Activated CD4-positive, alpha-beta memory T cell treated with anti-CD3 and anti-CD28 coated beads for 36 hours (primary cell): ENCODE measurements at regions of chr2 and their contacts with region 1.

Region 1: GRCh38 chr2:223760838-223761502 is 76.4 kb downstream of the AP1S3 start:
- DNase-seq: peak; percentile 78
- H3K4me3 Mint-ChIP-seq: no peak overlapping the region
- H3K27ac Mint-ChIP-seq: peak overlapping the region; percentile 65
- H3K4me1 Mint-ChIP-seq: peaks cover 24% of the 10 kb centered on the region
- H3K27me3 Mint-ChIP-seq: no peaks in the 10 kb centered on the region

Region 2: GRCh38 chr2:223696719-223697118 is 64.3 kb before region 1 on chr2:
- CTCF ChIA-PET with region 1: no interaction called
- POLR2A ChIA-PET with region 1: no interaction called
- intact Hi-C with region 1: loop called (anchors 1 kb)
- DNase-seq: no peak
- H3K4me3 Mint-ChIP-seq: no peak overlapping the region
- H3K27ac Mint-ChIP-seq: no peak overlapping the region
- H3K4me1 Mint-ChIP-seq: peaks cover 10% of the 10 kb centered on the region
- H3K27me3 Mint-ChIP-seq: peaks cover 2% of the 10 kb centered on the region

Region 3: GRCh38 chr2:223727562-223727961 is 33.4 kb before region 1 on chr2:
- CTCF ChIA-PET with region 1: no interaction called
- POLR2A ChIA-PET with region 1: no interaction called
- intact Hi-C with region 1: loop called (anchors 5 kb)
- DNase-seq: peak; percentile 25
- H3K4me3 Mint-ChIP-seq: no peak overlapping the region
- H3K27ac Mint-ChIP-seq: no peak overlapping the region
- H3K4me1 Mint-ChIP-seq: no peaks in the 10 kb centered on the region
- H3K27me3 Mint-ChIP-seq: peaks cover 2% of the 10 kb centered on the region

Region 4: DNA sequence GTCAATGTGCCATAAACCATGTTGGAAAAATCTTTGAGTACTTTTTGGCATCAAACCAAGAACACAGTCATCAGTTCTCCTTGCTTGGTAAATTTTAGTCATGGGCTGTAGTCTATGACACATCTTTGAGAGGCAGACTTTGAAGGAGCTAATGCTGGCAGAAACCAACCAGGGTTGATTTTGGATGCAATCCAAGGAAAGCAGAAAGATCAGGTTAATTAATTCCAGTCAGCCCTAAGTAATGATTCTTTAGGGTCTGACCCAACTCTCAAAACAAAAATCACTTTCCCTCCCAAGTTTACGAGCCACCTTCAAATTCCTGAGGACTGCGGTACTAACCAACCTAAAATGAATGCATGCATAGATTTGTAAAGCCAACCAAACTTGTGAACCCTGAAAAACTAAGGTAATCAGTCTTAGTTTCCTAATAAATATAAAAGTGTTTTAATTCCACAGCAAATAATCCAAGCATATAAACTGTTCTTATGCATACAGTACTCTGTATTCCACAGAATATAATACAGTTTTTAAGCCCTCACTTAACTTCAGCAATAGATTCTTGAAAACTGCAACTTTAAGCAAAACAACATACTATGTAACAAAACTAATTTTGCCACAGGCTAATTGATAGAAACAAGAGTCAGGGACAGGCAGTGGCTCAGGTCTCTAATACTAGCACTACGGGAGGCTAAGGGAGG is 54.4 kb after region 1 on chr2:
- CTCF ChIA-PET with region 1: no interaction called
- POLR2A ChIA-PET with region 1: no interaction called
- intact Hi-C with region 1: loop called (anchors 2 kb)
- DNase-seq: no peak
- H3K4me3 Mint-ChIP-seq: no peak overlapping the region
- H3K27ac Mint-ChIP-seq: no peak overlapping the region
- H3K4me1 Mint-ChIP-seq: peaks cover 9% of the 10 kb centered on the region
- H3K27me3 Mint-ChIP-seq: no peaks in the 10 kb centered on the region

Region 5: GRCh38 chr2:223837287-223838061 is 76.5 kb after region 1 on chr2 and contains the start of gene AP1S3:
- CTCF ChIA-PET with region 1: interaction called, 4 read pairs
- POLR2A ChIA-PET with region 1: no interaction called
- intact Hi-C with region 1: loop called (anchors 1 kb)
- DNase-seq: peak; percentile 83
- H3K4me3 Mint-ChIP-seq: peak within 1 kb of the TSS; percentile 94
- H3K27ac Mint-ChIP-seq: no peak within 1 kb of the TSS
- H3K4me1 Mint-ChIP-seq: peaks cover 11% of the 10 kb centered on the region
- H3K27me3 Mint-ChIP-seq: no peaks in the 10 kb centered on the region
- total RNA-seq, gene AP1S3: 10.1 to 12.1 TPM

Region 6: DNA sequence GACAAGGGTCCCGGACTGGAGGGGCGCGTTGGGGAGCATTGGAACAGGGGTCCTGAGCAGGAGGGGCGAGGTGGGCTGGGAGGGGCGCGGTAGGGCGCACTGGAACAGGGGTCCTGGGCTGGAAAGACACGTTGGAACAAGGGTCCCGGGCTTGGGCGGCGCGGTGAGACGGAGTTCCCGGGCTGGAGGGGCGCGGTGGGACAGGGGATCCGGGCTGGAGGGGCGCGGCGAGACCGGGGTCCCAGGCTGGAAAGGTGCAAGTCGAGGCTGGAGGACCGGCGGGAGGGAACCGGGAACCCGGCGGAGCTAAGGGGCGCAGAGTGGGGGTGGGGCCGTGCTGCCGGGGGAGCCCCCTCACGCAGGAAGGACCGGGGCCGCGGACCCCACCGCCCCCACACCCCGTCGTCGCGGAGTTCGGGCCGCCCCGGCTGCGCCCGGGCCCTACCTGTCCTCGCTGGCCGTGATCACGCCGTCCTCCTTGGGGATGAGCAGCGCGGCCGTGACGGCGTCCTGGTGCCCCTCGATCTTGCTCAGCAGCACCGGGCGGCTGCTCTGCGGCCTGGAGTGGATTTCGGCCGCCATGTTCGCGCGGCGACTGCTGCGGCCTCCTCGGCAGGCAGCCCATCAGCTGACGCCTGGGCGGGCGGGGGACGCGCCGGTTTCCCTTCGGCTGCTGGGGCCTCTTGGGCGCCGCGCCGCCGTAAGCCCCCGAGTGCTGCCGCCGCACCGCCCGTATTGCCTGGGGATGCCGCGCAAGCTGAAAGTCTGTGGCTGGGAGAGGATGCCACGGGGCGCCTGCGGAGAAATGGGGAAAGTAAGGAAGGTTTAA is 183.9 kb after region 1 on chr2 and contains the start of gene WDFY1:
- CTCF ChIA-PET with region 1: no interaction called
- POLR2A ChIA-PET with region 1: interaction called, 5 read pairs
- intact Hi-C with region 1: loop called (anchors 1 kb)
- DNase-seq: peak; percentile 88
- H3K4me3 Mint-ChIP-seq: peak within 1 kb of the TSS; percentile 91
- H3K27ac Mint-ChIP-seq: peak within 1 kb of the TSS; percentile 91
- H3K4me1 Mint-ChIP-seq: peaks cover 54% of the 10 kb centered on the region
- H3K27me3 Mint-ChIP-seq: no peaks in the 10 kb centered on the region
- total RNA-seq, gene WDFY1: 48.7 to 50.1 TPM

Region 7: GRCh38 chr2:224165901-224166319 is 404.9 kb after region 1 on chr2:
- CTCF ChIA-PET with region 1: no interaction called
- POLR2A ChIA-PET with region 1: no interaction called
- intact Hi-C with region 1: no loop called
- DNase-seq: no peak
- H3K4me3 Mint-ChIP-seq: no peak overlapping the region
- H3K27ac Mint-ChIP-seq: no peak overlapping the region
- H3K4me1 Mint-ChIP-seq: no peaks in the 10 kb centered on the region
- H3K27me3 Mint-ChIP-seq: peaks cover 10% of the 10 kb centered on the region